ENCODE measurements at regions of chr17 and their contacts with region 1.

Region 1: DNA sequence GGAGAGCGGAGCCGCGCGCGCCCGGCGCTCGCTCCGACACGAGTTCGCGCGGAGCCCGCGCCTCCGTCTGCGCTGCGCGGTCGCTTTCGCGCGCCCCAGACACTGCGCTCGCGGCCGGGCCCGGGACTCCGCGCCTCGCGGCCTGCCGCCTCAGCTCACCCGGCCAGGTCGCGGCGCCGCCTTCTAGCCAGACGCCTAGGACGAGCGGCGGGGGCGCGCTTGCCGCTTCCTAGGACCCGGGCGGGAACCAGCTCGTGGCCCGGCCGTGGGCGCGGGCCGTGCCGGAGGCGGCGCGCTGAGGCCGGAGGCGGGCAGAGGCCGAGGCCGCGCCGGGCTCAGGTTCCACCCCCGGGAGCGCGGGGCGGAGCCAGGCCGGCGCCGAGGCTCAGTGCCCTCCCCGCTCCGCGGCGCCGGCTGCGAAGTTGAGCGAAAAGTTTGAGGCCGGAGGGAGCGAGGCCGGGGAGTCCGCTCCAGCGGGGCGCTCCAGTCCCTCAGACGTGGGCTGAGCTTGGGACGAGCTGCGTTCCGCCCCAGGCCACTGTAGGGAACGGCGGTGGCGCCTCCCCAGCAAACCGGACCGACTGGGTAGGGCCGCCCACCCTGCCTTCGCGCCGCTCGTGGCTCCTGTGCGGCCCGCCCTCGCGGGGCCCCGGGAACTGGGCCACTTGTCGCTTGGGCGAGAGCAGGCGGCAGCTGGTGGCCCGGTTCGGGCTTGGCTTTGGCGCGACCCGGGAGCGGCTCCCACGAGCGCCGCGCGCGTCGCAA is at the start of gene SPHK1:
- DNase-seq: peak; percentile 72
- H3K4me3 Mint-ChIP-seq: peak within 1 kb of the TSS; percentile 89
- H3K27ac Mint-ChIP-seq: peak within 1 kb of the TSS; percentile 95
- H3K4me1 Mint-ChIP-seq: peaks cover 2% of the 10 kb centered on the region
- H3K27me3 Mint-ChIP-seq: no peaks in the 10 kb centered on the region
- total RNA-seq, gene SPHK1: 16.0 and 16.4 TPM in 2 replicates

Region 2: GRCh38 chr17:76072148-76072858 is 312.1 kb before region 1 on chr17 and contains the start of gene SRP68:
- intact Hi-C with region 1: loop called (anchors 5 kb)
- DNase-seq: peak; percentile 82
- H3K4me3 Mint-ChIP-seq: peak within 1 kb of the TSS; percentile 99
- H3K27ac Mint-ChIP-seq: peak within 1 kb of the TSS; percentile 100
- H3K4me1 Mint-ChIP-seq: peaks cover 26% of the 10 kb centered on the region
- H3K27me3 Mint-ChIP-seq: peaks cover 34% of the 10 kb centered on the region
- total RNA-seq, gene SRP68: 188 and 194 TPM in 2 replicates

Region 3: GRCh38 chr17:76353599-76354316 is 30.6 kb before region 1 on chr17 and contains the start of gene PRPSAP1:
- intact Hi-C with region 1: loop called (anchors 1 kb)
- DNase-seq: peak; percentile 82
- H3K4me3 Mint-ChIP-seq: peak within 1 kb of the TSS; percentile 92
- H3K27ac Mint-ChIP-seq: peak within 1 kb of the TSS; percentile 97
- H3K4me1 Mint-ChIP-seq: peaks cover 18% of the 10 kb centered on the region
- H3K27me3 Mint-ChIP-seq: no peaks in the 10 kb centered on the region
- total RNA-seq, gene PRPSAP1: 48.2 and 49.9 TPM in 2 replicates

Region 4: GRCh38 chr17:76452660-76453430 is 68.4 kb after region 1 on chr17 and contains the start of gene UBE2O:
- intact Hi-C with region 1: loop called (anchors 2 kb)
- DNase-seq: peak; percentile 93
- H3K4me3 Mint-ChIP-seq: peak within 1 kb of the TSS; percentile 85
- H3K27ac Mint-ChIP-seq: peak within 1 kb of the TSS; percentile 47
- H3K4me1 Mint-ChIP-seq: peaks cover 31% of the 10 kb centered on the region
- H3K27me3 Mint-ChIP-seq: peaks cover 4% of the 10 kb centered on the region
- total RNA-seq, gene UBE2O: 46.0 and 46.5 TPM in 2 replicates